Right cardiac atrium (tissue), 5 donors: ENCODE measurements at regions of chr11 and their contacts with region 1.

Region 1: DNA sequence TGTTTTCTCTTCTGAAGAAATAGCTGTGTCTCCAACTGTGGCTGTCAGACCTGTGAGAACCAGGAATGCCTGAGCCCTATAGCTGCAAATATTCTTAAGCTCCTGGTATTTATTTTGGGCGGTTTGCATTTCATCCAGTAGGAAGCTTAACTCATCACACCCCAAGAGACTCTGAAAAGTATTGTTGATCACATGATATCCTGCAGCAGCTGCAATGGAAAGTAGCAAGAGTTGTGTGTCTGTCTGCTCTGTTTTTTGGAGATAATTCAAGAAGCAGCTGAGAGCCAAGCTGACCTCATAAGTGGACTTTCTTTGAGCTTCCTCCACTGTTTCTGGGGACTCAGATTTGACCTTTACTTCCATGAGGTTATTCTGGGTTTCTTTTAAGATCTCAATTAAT is 36.4 kb upstream of the MRPL17 start:
- DNase-seq: no peak
- ATAC-seq: peak in 1 of 2 donors; percentile 14
- H3K4me3 ChIP-seq: no peak overlapping the region
- H3K27ac ChIP-seq: no peak overlapping the region
- H3K4me1 ChIP-seq: no peaks in the 10 kb centered on the region
- H3K27me3 ChIP-seq: no peaks in the 10 kb centered on the region

Region 2: DNA sequence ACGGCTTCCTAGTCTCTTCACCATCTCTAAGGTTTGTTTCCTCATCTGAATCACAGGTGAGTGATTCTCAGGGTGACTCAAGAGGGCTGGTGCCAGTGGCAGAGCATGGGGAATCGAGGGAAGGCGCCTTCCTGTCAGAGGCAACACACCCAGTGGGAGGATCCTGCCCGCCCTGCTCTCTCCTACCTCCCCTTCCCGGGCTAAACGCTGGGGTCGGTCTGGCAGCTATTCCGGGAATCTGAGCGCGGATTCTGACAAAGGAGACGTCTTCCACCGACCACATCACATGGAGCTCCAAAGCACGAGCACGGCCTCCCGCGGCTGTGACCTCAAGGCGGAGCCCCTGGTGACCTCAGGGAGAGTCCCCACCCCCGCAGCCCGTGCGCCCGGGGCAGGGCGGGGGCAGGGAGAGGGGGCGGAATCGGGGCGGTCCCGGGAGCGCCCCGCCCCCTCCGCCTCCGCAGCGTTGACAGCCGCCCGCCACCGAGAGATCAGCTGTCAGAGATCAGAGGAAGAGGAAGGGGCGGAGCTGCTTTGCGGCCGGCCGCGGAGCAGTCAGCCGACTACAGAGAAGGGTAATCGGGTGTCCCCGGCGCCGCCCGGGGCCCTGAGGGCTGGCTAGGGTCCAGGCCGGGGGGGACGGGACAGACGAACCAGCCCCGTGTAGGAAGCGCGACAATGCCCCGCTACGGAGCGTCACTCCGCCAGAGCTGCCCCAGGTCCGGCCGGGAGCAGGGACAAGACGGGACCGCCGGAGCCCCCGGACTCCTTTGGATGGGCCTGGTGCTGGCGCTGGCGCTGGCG is 329.5 kb before region 1 on chr11 and contains the start of gene SMPD1:
- intact Hi-C with region 1: loop called in 1 of 4 experiments (anchors 10 kb)
- DNase-seq: peak; percentile 94 to 98 (median 98)
- ATAC-seq: peak; percentile 98
- H3K4me3 ChIP-seq: peak within 1 kb of the TSS; percentile 64
- H3K27ac ChIP-seq: peak within 1 kb of the TSS; percentile 83
- H3K4me1 ChIP-seq: peaks cover 4% of the 10 kb centered on the region
- H3K27me3 ChIP-seq: no peaks in the 10 kb centered on the region
- total RNA-seq, gene SMPD1: 60.6 to 67.7 (median 65.0) TPM

Region 3: DNA sequence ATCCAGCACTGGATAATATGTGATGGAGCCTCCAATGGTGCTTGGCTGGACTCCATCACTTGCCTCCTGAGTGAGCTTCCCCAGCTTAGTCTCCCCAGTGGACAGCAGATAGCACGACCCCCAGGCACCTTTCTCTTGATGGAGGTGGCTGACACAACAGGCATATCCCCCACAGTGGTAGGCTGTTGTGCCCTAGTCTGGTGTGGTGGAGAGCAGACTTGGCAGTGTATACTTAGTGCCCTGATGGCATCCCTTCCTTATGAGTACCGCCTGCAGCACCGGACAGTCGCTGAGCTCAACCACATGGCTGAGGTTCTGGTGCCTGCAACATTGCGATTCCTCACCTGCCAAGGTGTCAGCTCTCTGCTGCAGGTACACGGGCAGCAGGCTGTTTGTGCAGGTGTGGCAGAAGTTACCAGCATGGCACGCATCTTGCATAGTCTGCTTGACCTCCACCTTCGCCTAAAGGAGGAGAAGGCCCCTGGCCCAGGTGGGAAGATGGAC is 172.3 kb before region 1 on chr11:
- intact Hi-C with region 1: no loop called
- DNase-seq: no peak
- ATAC-seq: peak in 1 of 2 donors; percentile 8
- H3K4me3 ChIP-seq: no peak overlapping the region
- H3K27ac ChIP-seq: no peak overlapping the region
- H3K4me1 ChIP-seq: no peaks in the 10 kb centered on the region
- H3K27me3 ChIP-seq: no peaks in the 10 kb centered on the region